GM12878 (cell line): ENCODE measurements at regions of chr10 and their contacts with region 1.

Region 1: DNA sequence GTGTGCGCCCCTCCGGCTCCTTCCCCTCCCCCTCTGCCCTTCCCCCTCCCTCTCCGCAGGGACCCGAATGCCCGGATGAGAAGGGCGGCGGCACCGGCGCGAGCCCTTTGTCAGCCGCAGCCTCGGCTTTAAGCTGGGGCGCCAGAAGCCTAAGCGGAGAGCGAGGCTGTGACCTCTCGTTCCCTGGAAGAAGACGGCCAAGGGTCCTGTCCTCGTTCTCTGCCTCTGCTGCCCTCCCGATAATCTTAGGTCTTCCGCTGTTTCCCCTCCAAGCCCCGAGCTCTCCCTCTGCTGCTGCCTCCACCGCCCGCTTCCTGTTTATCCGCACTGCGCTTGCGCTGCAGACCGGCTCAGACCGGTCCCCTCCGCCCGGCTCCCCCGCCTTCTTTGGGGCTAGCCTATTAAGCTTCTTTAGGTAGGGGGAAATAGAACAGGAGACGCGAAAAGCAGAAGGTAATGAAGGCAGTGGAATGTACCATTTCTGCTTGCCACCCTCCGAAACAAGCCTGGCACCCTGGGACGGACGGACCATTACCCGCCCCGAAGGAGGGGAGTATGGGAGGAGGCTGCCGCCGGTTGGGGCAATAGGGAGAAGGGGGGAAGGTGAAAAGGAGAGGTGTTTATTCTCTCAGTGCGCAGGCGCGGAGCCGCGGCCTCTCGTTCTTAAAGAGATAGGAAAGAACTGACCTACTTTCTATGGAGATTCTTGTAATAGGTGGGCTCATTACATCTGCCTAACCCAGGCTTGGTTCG is at the start of gene OGA:
- DNase-seq: peak; percentile 100
- ATAC-seq: peak; percentile 91
- H3K4me3 ChIP-seq: peak within 1 kb of the TSS; percentile 81
- H3K27ac ChIP-seq: peak within 1 kb of the TSS; percentile 95
- H3K4me1 ChIP-seq: peaks cover 11% of the 10 kb centered on the region; the same call in 1 of the 2 replicates
- H3K27me3 ChIP-seq: no peaks in the 10 kb centered on the region
- CTCF ChIP-seq: no peak
- EP300 ChIP-seq: peak; percentile 58 to 73; a peak in 2 of 4 replicates
- POLR2A ChIP-seq: peak; percentile 92
- RAD21 ChIP-seq: no peak
- polyA plus RNA-seq, gene OGA: 23.0 to 28.3 TPM

Region 2: DNA sequence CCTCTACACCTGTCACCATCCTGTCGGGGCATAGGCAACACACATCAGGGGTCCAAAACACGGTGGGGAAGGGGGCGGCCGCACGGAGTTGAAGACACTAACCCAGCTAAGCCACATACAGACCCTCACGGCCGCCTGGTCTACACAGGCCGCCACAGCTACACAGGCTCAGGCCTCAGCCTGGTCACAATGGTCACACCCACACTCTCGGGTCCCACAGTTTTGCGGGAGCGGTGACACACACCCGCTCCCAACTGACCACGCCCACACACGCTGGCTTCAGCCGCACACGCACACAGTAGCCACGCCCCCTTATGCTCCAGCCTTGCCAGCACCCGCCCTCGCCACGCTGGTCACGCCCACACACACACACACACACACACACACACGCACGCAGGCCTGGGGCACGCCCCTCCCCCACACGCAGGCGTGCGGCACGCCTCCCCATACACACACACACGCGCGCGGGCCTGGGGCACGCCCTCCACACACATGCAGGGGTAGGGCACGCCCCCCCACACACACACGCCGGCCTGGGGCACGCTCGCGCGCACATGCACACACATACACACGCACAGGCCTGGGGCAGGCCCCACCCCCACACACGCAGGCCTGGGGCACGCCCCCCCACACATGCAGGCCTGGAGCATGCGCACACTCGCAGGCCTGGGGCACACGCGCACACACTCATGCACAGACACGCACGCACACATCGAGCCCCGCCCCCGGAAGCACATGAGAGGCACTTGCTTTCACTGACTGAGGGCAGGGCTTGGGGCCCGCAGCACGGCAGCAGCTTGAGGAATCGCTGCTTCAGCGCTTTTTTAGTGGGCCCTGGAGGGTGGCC is 12.2 kb after region 1 on chr10:
- CTCF ChIA-PET with region 1: interaction called, 13 read pairs
- POLR2A ChIA-PET with region 1: interaction called, 33 read pairs
- RAD21 ChIA-PET with region 1: interaction called, 7 read pairs
- SMC1A ChIA-PET with region 1: interaction called, 13 read pairs
- in situ Hi-C with region 1: no loop called
- intact Hi-C with region 1: loop called (anchors 1 kb)
- DNase-seq: peak; percentile 81
- ATAC-seq: peak; percentile 87
- H3K4me3 ChIP-seq: peak overlapping the region; percentile 63
- H3K27ac ChIP-seq: peak overlapping the region; percentile 82
- H3K4me1 ChIP-seq: peaks cover 22% of the 10 kb centered on the region
- H3K27me3 ChIP-seq: no peaks in the 10 kb centered on the region
- CTCF ChIP-seq: no peak
- EP300 ChIP-seq: 0 out of 4 replicates have a peak, but pooled peaks have one; percentile 6 to 35
- POLR2A ChIP-seq: peak; percentile 83
- RAD21 ChIP-seq: no peak

Region 3: GRCh38 chr10:101851411-101852116 is 33.3 kb after region 1 on chr10:
- CTCF ChIA-PET with region 1: no interaction called
- POLR2A ChIA-PET with region 1: no interaction called
- RAD21 ChIA-PET with region 1: no interaction called
- SMC1A ChIA-PET with region 1: no interaction called
- in situ Hi-C with region 1: no loop called
- intact Hi-C with region 1: no loop called
- DNase-seq: no peak
- ATAC-seq: no peak
- H3K4me3 ChIP-seq: no peak overlapping the region
- H3K27ac ChIP-seq: no peak overlapping the region
- H3K4me1 ChIP-seq: no peaks in the 10 kb centered on the region
- H3K27me3 ChIP-seq: no peaks in the 10 kb centered on the region
- CTCF ChIP-seq: no peak
- EP300 ChIP-seq: no peak
- POLR2A ChIP-seq: no peak
- RAD21 ChIP-seq: no peak

Region 4: DNA sequence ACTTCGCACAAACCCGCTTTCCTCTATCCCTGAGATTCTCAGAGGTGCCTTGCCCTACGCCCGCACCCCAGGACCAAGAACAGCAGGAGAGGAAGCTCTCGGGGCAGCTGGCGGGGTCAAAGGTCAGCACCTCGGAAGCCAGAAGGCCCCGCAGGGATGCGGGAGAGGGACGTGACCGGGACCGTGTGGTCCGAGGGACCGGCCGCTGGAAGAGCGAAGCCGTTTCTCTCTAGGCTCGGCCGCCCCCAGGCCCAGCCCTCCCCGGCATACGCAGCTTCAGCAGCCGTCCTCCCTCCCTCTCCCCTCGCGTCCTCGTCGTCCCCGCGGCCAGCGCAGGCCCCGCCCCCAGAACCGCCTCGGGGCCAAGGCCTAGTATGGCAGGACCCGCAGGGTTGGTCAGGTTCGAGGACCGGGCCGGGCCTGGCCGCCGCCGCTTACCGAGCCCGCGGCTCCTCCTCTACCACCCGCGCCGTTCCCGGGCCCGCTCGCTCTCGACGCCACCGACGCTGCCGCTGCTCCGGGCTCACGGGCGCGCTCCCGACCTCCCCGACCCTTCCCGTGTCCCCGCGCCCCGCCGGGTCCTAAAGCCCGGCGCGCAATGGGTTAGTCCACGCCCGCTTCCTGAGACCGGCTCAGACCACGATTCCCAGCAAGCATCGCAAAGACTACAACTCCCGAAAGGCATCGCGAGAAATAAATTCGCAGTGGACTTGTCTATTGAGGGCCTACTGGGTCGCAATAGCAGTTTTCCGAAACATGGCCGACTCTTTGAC is 237.5 kb after region 1 on chr10 and contains the start of gene ARMH3:
- CTCF ChIA-PET with region 1: interaction called, 3 read pairs
- POLR2A ChIA-PET with region 1: interaction called, 11 read pairs
- RAD21 ChIA-PET with region 1: interaction called, 3 read pairs
- SMC1A ChIA-PET with region 1: interaction called, 3 read pairs
- in situ Hi-C with region 1: no loop called
- intact Hi-C with region 1: no loop called
- DNase-seq: peak; percentile 87
- ATAC-seq: peak; percentile 98
- H3K4me3 ChIP-seq: peak within 1 kb of the TSS; percentile 93
- H3K27ac ChIP-seq: peak within 1 kb of the TSS; percentile 77
- H3K4me1 ChIP-seq: 0 out of 2 replicates have a peak, but pooled peaks cover 9% of the 10 kb centered on the region
- H3K27me3 ChIP-seq: no peaks in the 10 kb centered on the region
- CTCF ChIP-seq: no peak
- EP300 ChIP-seq: no peak
- POLR2A ChIP-seq: peak; percentile 83
- RAD21 ChIP-seq: no peak
- polyA plus RNA-seq, gene ARMH3: 13.6 to 14.0 TPM